ENCODE measurements at regions of chr16 and their contacts with region 1.

Region 1: GRCh38 chr16:5523829-5524228 is 426.2 kb upstream of the EEF2KMT start:
- DNase-seq: no peak
- H3K4me3 Mint-ChIP-seq: no peak overlapping the region
- H3K27ac Mint-ChIP-seq: no peak overlapping the region
- H3K4me1 Mint-ChIP-seq: no peaks in the 10 kb centered on the region
- H3K27me3 Mint-ChIP-seq: no peaks in the 10 kb centered on the region

Region 2: DNA sequence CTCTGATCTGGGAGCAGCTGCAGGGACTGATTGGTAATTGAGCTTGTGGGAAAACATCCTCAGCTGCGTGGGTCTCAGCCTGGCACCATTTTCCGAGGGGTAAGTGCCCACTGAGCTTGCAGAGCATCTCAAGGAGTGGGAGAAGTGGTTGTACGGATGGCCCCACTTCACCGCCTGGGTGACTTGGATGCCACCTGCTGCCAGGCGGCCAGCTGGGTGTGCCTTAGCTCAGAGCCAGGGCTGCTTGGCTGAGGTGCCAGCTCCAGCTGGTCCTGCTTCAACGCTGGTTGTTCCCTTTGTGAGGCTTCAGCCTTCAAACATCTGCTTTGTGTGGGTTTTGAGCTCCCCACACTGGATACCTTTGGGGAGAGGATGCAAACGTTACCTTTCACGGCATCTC is 56.5 kb after region 1 on chr16:
- CTCF ChIA-PET with region 1: no interaction called
- POLR2A ChIA-PET with region 1: no interaction called
- intact Hi-C with region 1: loop called (anchors 10 kb)
- DNase-seq: no peak
- H3K4me3 Mint-ChIP-seq: no peak overlapping the region
- H3K27ac Mint-ChIP-seq: no peak overlapping the region
- H3K4me1 Mint-ChIP-seq: no peaks in the 10 kb centered on the region
- H3K27me3 Mint-ChIP-seq: peaks cover 3% of the 10 kb centered on the region

Measured in activated CD4-positive, alpha-beta memory T cell treated with anti-CD3 and anti-CD28 coated beads for 36 hours (primary cell).